Breast epithelium (tissue), 4 donors: ENCODE measurements at regions of chr22 and their contacts with region 1.

Region 1: GRCh38 chr22:37163575-37164504 is 14.1 kb upstream of the IL2RB start:
- DNase-seq: no peak
- H3K4me3 ChIP-seq: no peak overlapping the region
- H3K27ac ChIP-seq: no peak overlapping the region
- H3K4me1 ChIP-seq: no peaks in the 10 kb centered on the region
- H3K27me3 ChIP-seq: no peaks in the 10 kb centered on the region
- CTCF ChIP-seq: no peak
- POLR2A ChIP-seq: no peak

Region 2: GRCh38 chr22:37192741-37193140 is 28.9 kb after region 1 on chr22:
- intact Hi-C with region 1: no loop called
- DNase-seq: no peak
- H3K4me3 ChIP-seq: no peak overlapping the region
- H3K27ac ChIP-seq: peak overlapping the region in 1 of 2 donors; percentile 10
- H3K4me1 ChIP-seq: peaks cover 19 to 23% of the 10 kb centered on the region in 2 donors
- H3K27me3 ChIP-seq: no peaks in the 10 kb centered on the region
- CTCF ChIP-seq: no peak
- POLR2A ChIP-seq: no peak

Region 3: GRCh38 chr22:37203354-37204037 is 39.7 kb after region 1 on chr22:
- intact Hi-C with region 1: loop called (anchors 2 kb)
- DNase-seq: peak in 1 of 2 donors; percentile 48
- H3K4me3 ChIP-seq: no peak overlapping the region
- H3K27ac ChIP-seq: no peak overlapping the region
- H3K4me1 ChIP-seq: no peaks in the 10 kb centered on the region
- H3K27me3 ChIP-seq: no peaks in the 10 kb centered on the region
- CTCF ChIP-seq: no peak
- POLR2A ChIP-seq: no peak